Activated CD8-positive, alpha-beta T cell treated with anti-CD3 and anti-CD28 coated beads for 36 hours (primary cell): ENCODE measurements at regions of chr18 and their contacts with region 1.

Region 1: GRCh38 chr18:812376-813171 is 532 bp upstream of the YES1 start:
- DNase-seq: peak; percentile 93
- ATAC-seq: peak; percentile 66
- H3K4me3 Mint-ChIP-seq: peak overlapping the region; percentile 84
- H3K27ac Mint-ChIP-seq: peak overlapping the region; percentile 100
- H3K4me1 Mint-ChIP-seq: peaks cover 66% of the 10 kb centered on the region
- H3K27me3 Mint-ChIP-seq: peaks cover 2% of the 10 kb centered on the region
- CTCF ChIP-seq: no peak

Region 2: DNA sequence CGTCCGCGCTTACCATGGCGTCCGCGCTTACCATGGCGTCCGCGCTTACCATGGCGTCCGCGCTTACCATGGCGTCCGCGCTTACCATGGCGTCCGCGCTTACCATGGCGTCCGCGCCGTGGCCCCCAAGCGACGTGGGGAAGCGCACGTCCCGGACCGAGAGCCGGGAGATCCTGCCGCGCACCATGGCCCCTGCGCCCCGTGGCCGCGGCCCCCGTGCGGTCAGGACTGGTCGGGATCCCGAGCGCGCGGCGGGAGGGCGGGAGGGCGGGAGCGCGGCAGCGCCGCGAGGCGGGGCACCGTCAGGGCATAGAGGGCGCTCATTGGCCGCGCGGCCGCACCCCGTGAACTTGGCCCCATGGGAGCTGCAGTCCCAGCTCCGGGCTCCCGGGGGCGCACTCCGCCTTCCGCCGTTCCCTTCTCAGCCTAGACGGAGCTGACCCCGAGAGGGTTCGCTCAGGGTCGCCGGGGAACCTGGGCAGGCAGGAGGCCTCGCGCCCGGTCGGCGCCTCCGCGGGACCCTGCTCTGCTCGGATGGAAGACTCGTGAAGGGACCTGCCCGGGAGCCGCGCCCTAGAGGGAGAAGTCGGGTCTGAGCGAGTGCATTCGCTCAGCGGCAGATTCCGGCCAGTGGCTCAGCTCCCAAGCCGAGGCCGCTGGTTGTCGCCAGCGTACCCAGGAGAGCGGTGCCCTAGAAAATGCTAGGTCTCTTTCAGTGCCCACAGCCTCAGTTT is 100.0 kb before region 1 on chr18 and contains the start of gene ENOSF1:
- CTCF ChIA-PET with region 1: interaction called, 13 read pairs
- POLR2A ChIA-PET with region 1: interaction called, 9 read pairs
- intact Hi-C with region 1: loop called (anchors 5 kb)
- DNase-seq: peak; percentile 91
- ATAC-seq: peak; percentile 87
- H3K4me3 Mint-ChIP-seq: peak within 1 kb of the TSS; percentile 96
- H3K27ac Mint-ChIP-seq: peak within 1 kb of the TSS; percentile 97
- H3K4me1 Mint-ChIP-seq: peaks cover 64% of the 10 kb centered on the region
- H3K27me3 Mint-ChIP-seq: no peaks in the 10 kb centered on the region
- CTCF ChIP-seq: peak; percentile 87
- total RNA-seq, gene ENOSF1: 113 to 114 TPM

Region 3: DNA sequence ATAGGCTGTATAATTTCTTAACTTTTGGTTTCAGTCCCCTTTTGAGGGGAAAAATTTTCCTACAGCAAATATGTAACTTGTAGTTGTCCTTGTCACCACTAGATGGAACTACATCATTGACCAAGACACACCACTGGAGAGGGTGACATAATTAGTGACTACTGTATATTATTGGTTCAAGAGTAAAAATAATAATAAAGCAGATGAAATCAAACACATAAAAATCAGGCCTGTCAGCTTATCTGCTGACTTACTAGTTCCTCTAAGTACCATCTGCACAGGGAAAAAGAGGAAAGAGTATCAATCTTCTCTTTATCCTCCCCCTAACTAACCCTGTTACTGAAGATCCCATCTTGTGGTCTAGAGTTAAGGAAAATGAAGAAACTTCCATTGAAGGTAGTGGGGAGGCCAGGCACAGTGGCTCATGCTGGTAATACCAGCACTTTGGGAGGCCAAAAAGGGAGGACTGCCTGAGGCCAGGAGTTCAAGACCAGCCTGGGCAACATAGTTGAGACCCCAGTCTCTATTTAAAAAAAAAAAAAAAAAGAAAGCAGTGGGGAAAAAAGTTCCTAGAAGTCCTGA is 70.6 kb before region 1 on chr18:
- CTCF ChIA-PET with region 1: interaction called, 14 read pairs
- POLR2A ChIA-PET with region 1: interaction called, 3 read pairs
- intact Hi-C with region 1: loop called (anchors 5 kb)
- DNase-seq: no peak
- ATAC-seq: peak; percentile 83
- H3K4me3 Mint-ChIP-seq: no peak overlapping the region
- H3K27ac Mint-ChIP-seq: no peak overlapping the region
- H3K4me1 Mint-ChIP-seq: peaks cover 2% of the 10 kb centered on the region
- H3K27me3 Mint-ChIP-seq: no peaks in the 10 kb centered on the region
- CTCF ChIP-seq: peak; percentile 74

Region 4: DNA sequence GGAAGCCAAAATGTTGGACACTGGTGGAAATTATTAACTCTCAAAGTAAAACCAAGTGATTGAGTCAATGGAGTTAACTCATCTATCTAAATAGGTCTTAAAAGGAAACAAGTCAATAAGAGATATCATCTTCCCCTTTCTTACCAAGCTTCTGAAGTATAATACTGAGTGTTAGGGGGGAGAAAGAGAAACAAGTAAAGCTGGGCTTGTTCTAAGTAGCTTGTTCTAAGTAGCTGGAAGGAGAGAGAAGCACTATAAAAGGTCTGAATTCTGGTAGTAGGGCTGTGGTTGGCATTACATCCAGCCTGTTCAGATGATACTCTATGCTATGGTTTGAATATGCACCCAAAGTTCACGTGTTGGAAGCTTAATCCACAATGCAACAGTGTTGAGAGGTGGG is 27.3 kb before region 1 on chr18:
- CTCF ChIA-PET with region 1: no interaction called
- POLR2A ChIA-PET with region 1: no interaction called
- intact Hi-C with region 1: no loop called
- DNase-seq: no peak
- ATAC-seq: no peak
- H3K4me3 Mint-ChIP-seq: no peak overlapping the region
- H3K27ac Mint-ChIP-seq: no peak overlapping the region
- H3K4me1 Mint-ChIP-seq: peaks cover 52% of the 10 kb centered on the region
- H3K27me3 Mint-ChIP-seq: no peaks in the 10 kb centered on the region
- CTCF ChIP-seq: no peak

Region 5: GRCh38 chr18:824179-824578 is 11.6 kb after region 1 on chr18:
- CTCF ChIA-PET with region 1: interaction called, 98 read pairs
- POLR2A ChIA-PET with region 1: interaction called, 16 read pairs
- intact Hi-C with region 1: no loop called
- DNase-seq: no peak
- ATAC-seq: no peak
- H3K4me3 Mint-ChIP-seq: no peak overlapping the region
- H3K27ac Mint-ChIP-seq: no peak overlapping the region
- H3K4me1 Mint-ChIP-seq: peaks cover 14% of the 10 kb centered on the region
- H3K27me3 Mint-ChIP-seq: no peaks in the 10 kb centered on the region
- CTCF ChIP-seq: no peak